Ovary (tissue), 10 donors: ENCODE measurements at regions of chr17 and their contacts with region 1.

Region 1: GRCh38 chr17:20121359-20122253 is 112.4 kb downstream of the SPECC1 start:
- DNase-seq: peak; percentile 59 to 79 (median 77)
- H3K4me3 ChIP-seq: no peak overlapping the region
- H3K27ac ChIP-seq: no peak overlapping the region
- H3K4me1 ChIP-seq: peaks cover 5% of the 10 kb centered on the region
- H3K27me3 ChIP-seq: no peaks in the 10 kb centered on the region
- CTCF ChIP-seq: peak; percentile 83 to 86 (median 83)
- EP300 ChIP-seq: no peak
- POLR2A ChIP-seq: no peak

Region 2: GRCh38 chr17:19992803-19993713 is 128.5 kb before region 1 on chr17:
- intact Hi-C with region 1: loop called in 3 of 4 experiments (anchors 1 to 5 kb)
- DNase-seq: peak; percentile 87 to 92 (median 89)
- H3K4me3 ChIP-seq: no peak overlapping the region
- H3K27ac ChIP-seq: no peak overlapping the region
- H3K4me1 ChIP-seq: no peaks in the 10 kb centered on the region
- H3K27me3 ChIP-seq: no peaks in the 10 kb centered on the region
- CTCF ChIP-seq: peak; percentile 45 to 79 (median 69)
- EP300 ChIP-seq: no peak
- POLR2A ChIP-seq: no peak

Region 3: GRCh38 chr17:20009302-20010098 is 112.1 kb before region 1 on chr17 and contains the start of gene SPECC1:
- intact Hi-C with region 1: loop called in 1 of 4 experiments (anchors 5 kb)
- DNase-seq: peak; percentile 84 to 95 (median 90)
- H3K4me3 ChIP-seq: peak within 1 kb of the TSS; percentile 76
- H3K27ac ChIP-seq: peak within 1 kb of the TSS; percentile 72 to 76
- H3K4me1 ChIP-seq: no peaks in the 10 kb centered on the region
- H3K27me3 ChIP-seq: no peaks in the 10 kb centered on the region
- CTCF ChIP-seq: peak in 2 of 3 donors; percentile 99
- EP300 ChIP-seq: no peak
- POLR2A ChIP-seq: no peak
- total RNA-seq, gene SPECC1: 34.7 to 86.5 (median 68.7) TPM

Region 4: GRCh38 chr17:20216154-20216815 is 94.7 kb after region 1 on chr17:
- intact Hi-C with region 1: loop called in 1 of 4 experiments (anchors 10 kb)
- DNase-seq: no peak
- H3K4me3 ChIP-seq: no peak overlapping the region
- H3K27ac ChIP-seq: no peak overlapping the region
- H3K4me1 ChIP-seq: no peaks in the 10 kb centered on the region
- H3K27me3 ChIP-seq: no peaks in the 10 kb centered on the region
- CTCF ChIP-seq: no peak
- EP300 ChIP-seq: no peak
- POLR2A ChIP-seq: no peak

Region 5: DNA sequence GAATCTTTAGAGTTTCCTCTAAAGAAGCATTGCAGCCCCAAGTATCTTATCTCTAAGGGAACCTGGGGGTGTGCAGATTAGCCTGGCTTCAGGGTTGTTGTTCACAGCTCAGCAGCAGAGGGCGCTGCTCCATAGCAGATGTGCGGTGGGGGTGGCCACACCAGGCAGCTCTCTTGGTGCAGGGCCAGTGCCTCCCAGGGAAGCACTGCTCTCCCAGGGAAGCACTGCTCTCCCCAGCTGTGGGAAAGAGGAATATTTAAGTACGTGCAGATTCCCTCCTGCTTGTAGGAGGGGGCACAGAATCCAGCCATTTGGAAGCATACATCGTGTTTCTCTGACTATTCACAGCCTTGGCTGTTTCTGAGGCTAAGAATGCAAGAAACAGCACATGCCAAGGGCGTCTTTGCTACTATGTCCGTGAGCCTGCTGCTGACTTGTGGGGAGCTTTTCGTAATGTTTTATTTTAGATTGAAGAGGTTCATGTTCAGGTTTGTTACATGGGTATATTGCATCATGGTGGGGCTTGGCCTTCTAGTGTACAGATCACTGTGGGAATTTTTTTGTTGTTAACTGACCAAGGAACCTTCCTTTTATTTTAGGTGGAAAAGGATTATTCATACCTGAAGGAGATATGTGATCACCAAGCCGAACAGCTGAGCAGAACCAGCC is 105.3 kb after region 1 on chr17:
- intact Hi-C with region 1: loop called in 2 of 4 experiments (anchors 5 kb)
- DNase-seq: peak; percentile 88 to 93 (median 89)
- H3K4me3 ChIP-seq: no peak overlapping the region
- H3K27ac ChIP-seq: no peak overlapping the region
- H3K4me1 ChIP-seq: peaks cover 3% of the 10 kb centered on the region
- H3K27me3 ChIP-seq: no peaks in the 10 kb centered on the region
- CTCF ChIP-seq: peak; percentile 76 to 89 (median 80)
- EP300 ChIP-seq: no peak
- POLR2A ChIP-seq: no peak

Region 6: DNA sequence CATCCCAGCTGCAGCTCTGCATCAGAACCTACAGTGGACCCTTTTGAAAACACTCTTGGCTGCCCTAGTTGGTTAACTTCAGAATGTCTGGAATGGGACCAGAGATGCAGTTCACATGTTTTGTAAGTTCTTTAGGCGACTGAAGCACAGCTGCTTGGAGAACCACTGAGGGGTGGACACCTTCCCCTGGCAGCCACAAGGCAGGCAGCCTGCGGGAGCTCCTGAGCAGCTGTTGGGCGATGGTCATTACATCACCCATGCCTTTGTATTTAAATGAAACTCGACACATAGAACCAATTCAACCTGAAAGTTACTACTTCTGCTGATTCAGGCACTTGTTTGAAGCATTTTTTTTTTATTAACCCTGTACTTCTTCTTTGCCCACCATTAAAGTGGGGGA is 194.2 kb after region 1 on chr17:
- intact Hi-C with region 1: loop called in 2 of 4 experiments (anchors 5 to 10 kb)
- DNase-seq: no peak
- H3K4me3 ChIP-seq: no peak overlapping the region
- H3K27ac ChIP-seq: no peak overlapping the region
- H3K4me1 ChIP-seq: peaks cover 3% of the 10 kb centered on the region
- H3K27me3 ChIP-seq: no peaks in the 10 kb centered on the region
- CTCF ChIP-seq: no peak
- EP300 ChIP-seq: no peak
- POLR2A ChIP-seq: no peak